CD14-positive monocyte (primary cell): ENCODE measurements at regions of chr11 and their contacts with region 1.

Region 1: DNA sequence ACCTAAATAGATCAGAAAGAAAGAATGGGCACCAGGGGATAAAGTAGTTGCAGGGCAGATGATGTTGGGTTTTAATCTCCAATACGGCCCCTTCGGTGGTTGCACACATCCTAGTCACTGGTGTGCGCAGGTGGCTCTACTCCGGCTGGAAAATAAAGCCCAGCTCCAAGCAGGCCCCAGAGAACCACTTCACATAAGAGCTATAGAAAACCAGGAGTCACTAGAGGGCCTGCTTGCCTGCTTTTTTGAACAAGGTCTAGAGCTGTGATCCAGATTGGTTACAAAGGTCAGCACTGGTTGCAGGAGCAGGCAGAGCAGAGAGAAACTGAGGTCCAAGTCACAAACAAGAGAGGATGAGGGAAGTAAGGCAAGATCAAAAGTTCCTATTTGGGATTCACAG is 41.5 kb upstream of the MS4A8 start:
- DNase-seq: no peak
- H3K4me3 ChIP-seq: no peak overlapping the region
- H3K4me3 Mint-ChIP-seq: no peak overlapping the region
- H3K27ac ChIP-seq: no peak overlapping the region
- H3K27ac Mint-ChIP-seq: no peak overlapping the region
- H3K4me1 ChIP-seq: no peaks in the 10 kb centered on the region
- H3K4me1 Mint-ChIP-seq: no peaks in the 10 kb centered on the region
- H3K27me3 ChIP-seq: no peaks in the 10 kb centered on the region
- H3K27me3 Mint-ChIP-seq: peaks cover 0 to 3% (median 0%) of the 10 kb centered on the region in 3 donors
- CTCF ChIP-seq: no peak

Region 2: GRCh38 chr11:59523541-59523940 is 1134.3 kb before region 1 on chr11:
- intact Hi-C with region 1: no loop called
- DNase-seq: no peak
- H3K4me3 ChIP-seq: no peak overlapping the region
- H3K4me3 Mint-ChIP-seq: no peak overlapping the region
- H3K27ac ChIP-seq: no peak overlapping the region
- H3K27ac Mint-ChIP-seq: no peak overlapping the region
- H3K4me1 ChIP-seq: no peaks in the 10 kb centered on the region
- H3K4me1 Mint-ChIP-seq: no peaks in the 10 kb centered on the region
- H3K27me3 ChIP-seq: no peaks in the 10 kb centered on the region
- H3K27me3 Mint-ChIP-seq: peaks cover 0 to 1% (median 0%) of the 10 kb centered on the region in 3 donors
- CTCF ChIP-seq: no peak

Region 3: GRCh38 chr11:60718524-60719316 is 60.8 kb after region 1 on chr11:
- intact Hi-C with region 1: loop called in 1 of 2 experiments (anchors 1 kb)
- DNase-seq: no peak
- H3K4me3 ChIP-seq: no peak overlapping the region
- H3K4me3 Mint-ChIP-seq: no peak overlapping the region
- H3K27ac ChIP-seq: no peak overlapping the region
- H3K27ac Mint-ChIP-seq: no peak overlapping the region
- H3K4me1 ChIP-seq: no peaks in the 10 kb centered on the region
- H3K4me1 Mint-ChIP-seq: no peaks in the 10 kb centered on the region
- H3K27me3 ChIP-seq: no peaks in the 10 kb centered on the region
- H3K27me3 Mint-ChIP-seq: peaks cover 2 to 7% (median 3%) of the 10 kb centered on the region in 3 donors
- CTCF ChIP-seq: no peak